ENCODE measurements at regions of chr1 and their contacts with region 1.

Region 1: GRCh38 chr1:69459244-69459643 is 108.5 kb upstream of the LRRC7 start:
- DNase-seq: no peak
- H3K4me3 ChIP-seq: no peak overlapping the region
- H3K27ac ChIP-seq: no peak overlapping the region
- H3K27me3 ChIP-seq: no peaks in the 10 kb centered on the region
- CTCF ChIP-seq: peak in 1 of 56 donors; percentile 18

Region 2: GRCh38 chr1:69441496-69441895 is 17.7 kb before region 1 on chr1:
- intact Hi-C with region 1: loop called in 1 of 2 experiments (anchors 1 kb)
- DNase-seq: no peak
- H3K4me3 ChIP-seq: no peak overlapping the region
- H3K27ac ChIP-seq: no peak overlapping the region
- H3K27me3 ChIP-seq: peaks cover 0 to 4% (median 0%) of the 10 kb centered on the region in 45 donors
- CTCF ChIP-seq: no peak

Measured in dorsolateral prefrontal cortex (tissue), 120 donors.